Activated CD4-positive, alpha-beta memory T cell treated with anti-CD3 and anti-CD28 coated beads, Interleukin-2, amount 10 ng/mL, durations not matched to agents 7 days and 5 days (primary cell): ENCODE measurements at regions of chr3 and their contacts with region 1.

Region 1: GRCh38 chr3:112582244-112582874 is 20.5 kb downstream of the SLC35A5 start:
- DNase-seq: peak; percentile 51
- H3K4me3 Mint-ChIP-seq: no peak overlapping the region
- H3K27ac Mint-ChIP-seq: no peak overlapping the region
- H3K4me1 Mint-ChIP-seq: peaks cover 11% of the 10 kb centered on the region
- H3K27me3 Mint-ChIP-seq: no peaks in the 10 kb centered on the region

Region 2: DNA sequence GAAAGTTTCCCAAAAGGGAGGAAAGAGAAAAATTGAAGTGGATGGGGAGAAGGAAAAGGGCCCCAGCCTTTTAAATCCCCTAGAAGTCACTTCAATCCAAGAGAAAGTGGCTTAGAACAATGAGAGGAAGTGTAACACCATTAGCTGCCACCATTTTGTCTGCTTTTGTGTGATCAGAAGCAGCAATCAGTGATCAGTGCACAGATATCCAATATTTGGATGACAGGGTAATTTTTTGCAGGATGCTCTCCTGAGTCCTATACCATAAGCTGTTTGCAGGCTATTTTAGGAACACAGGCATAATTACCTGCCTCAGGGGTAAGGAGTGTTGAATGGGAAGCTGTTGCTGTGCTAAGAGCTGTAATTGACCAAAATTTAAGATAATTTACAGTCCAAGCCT is 10.9 kb after region 1 on chr3:
- CTCF ChIA-PET with region 1: interaction called, 13 read pairs
- POLR2A ChIA-PET with region 1: no interaction called
- DNase-seq: no peak
- H3K4me3 Mint-ChIP-seq: no peak overlapping the region
- H3K27ac Mint-ChIP-seq: no peak overlapping the region
- H3K4me1 Mint-ChIP-seq: peaks cover 6% of the 10 kb centered on the region
- H3K27me3 Mint-ChIP-seq: no peaks in the 10 kb centered on the region

Region 3: GRCh38 chr3:112602217-112602838 is 20.0 kb after region 1 on chr3:
- CTCF ChIA-PET with region 1: interaction called, 13 read pairs
- POLR2A ChIA-PET with region 1: no interaction called
- DNase-seq: no peak
- H3K4me3 Mint-ChIP-seq: no peak overlapping the region
- H3K27ac Mint-ChIP-seq: no peak overlapping the region
- H3K4me1 Mint-ChIP-seq: peaks cover 31% of the 10 kb centered on the region
- H3K27me3 Mint-ChIP-seq: peaks cover 2% of the 10 kb centered on the region

Region 4: DNA sequence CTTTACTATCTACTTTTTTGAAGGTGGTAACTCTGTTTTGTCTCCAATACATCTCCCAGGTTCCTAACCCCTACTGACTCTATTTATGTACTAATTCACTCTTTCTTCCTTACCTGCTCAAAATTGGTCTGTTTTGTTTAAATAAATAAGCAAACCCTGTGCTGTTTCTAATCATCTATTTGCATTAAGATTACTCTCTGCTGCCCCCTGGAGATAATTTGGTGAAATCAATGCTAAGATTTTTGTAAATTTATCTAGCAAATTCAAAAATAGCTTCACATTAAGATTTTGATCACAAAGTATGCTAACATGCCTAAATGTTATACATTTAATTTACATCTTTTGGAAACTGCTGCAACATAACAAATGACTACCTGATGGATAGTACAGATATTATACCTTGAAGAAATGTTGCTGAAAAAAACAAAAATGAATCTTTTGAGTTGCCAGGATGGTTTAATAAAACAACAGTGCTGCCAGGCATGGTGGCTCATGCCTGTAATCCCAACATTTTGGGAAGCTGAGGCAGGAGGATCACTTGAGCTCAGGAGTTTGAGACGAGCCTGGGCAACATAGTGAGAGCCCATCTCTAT is 397.0 kb after region 1 on chr3:
- CTCF ChIA-PET with region 1: interaction called, 16 read pairs
- POLR2A ChIA-PET with region 1: no interaction called
- DNase-seq: no peak
- H3K4me3 Mint-ChIP-seq: no peak overlapping the region
- H3K27ac Mint-ChIP-seq: no peak overlapping the region
- H3K4me1 Mint-ChIP-seq: peaks cover 56% of the 10 kb centered on the region
- H3K27me3 Mint-ChIP-seq: no peaks in the 10 kb centered on the region

Region 5: DNA sequence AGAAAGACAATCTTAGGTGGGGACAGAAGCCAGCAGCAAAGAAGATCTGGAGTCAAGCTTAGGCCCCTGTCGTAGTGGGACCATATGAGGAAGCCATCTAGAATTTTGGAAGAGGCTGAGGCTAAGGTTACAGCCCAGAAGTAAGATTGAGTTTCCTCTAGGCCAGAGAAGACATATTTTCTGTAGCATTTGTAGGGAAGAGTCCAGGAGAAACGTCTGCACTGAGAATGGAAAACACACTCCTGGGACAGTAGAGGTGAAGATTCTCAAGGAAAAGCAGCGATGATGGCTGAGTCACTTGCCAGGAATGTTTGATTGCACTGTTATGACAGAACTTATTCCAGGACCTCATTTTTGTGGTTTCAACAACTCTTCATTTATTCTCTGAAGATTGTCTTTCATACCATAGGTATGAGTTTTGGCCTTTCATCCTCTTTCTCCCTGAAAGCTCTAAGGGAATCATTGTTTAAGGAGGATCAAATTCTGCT is 515.6 kb after region 1 on chr3:
- CTCF ChIA-PET with region 1: no interaction called
- POLR2A ChIA-PET with region 1: no interaction called
- DNase-seq: no peak
- H3K4me3 Mint-ChIP-seq: no peak overlapping the region
- H3K27ac Mint-ChIP-seq: no peak overlapping the region
- H3K4me1 Mint-ChIP-seq: no peaks in the 10 kb centered on the region
- H3K27me3 Mint-ChIP-seq: no peaks in the 10 kb centered on the region